Colonic mucosa (tissue), 4 donors: ENCODE measurements at regions of chr5 and their contacts with region 1.

Region 1: DNA sequence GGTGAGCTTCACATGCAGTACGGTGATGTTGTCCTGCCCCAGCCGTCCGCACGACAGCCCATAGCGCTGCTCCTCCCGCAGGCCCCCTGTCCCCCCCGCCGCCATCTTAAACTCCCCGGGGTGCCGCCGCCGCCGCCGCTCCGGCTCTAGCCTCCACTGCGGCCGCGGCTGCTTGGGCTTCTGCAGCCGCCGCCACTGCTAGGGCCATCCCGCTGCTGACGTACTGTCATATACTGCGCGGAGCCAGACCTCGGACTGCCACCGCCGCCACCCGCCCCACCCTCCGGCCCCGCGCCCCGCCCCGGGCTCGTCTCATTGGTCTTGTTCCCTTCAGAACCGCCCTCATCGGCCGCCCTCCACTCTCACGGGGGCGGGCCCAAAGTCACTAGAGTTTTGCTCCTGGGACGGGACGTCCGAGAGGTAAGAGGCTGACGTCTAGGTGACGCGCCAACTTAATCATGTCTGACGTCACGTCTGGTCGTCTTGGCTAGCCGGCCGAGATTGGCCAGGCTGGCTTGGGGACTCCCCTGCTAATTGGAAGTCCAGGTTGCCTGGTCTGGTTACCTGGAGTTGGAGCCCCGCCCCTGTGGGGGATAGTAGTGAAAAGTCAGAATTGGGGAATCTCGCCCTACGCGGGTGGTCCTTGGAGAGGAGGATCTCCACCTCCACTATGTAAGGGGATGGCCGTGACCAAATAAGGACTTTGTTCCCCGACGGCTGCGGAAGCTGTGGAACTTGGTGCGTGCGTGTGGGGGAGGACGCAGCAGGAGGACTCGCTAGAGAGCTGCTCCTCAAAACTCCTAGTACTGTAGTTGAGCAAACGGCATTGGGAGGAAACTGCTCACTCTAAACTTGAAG is at the start of gene ELL2:
- DNase-seq: peak; percentile 99
- H3K4me3 ChIP-seq: peak within 1 kb of the TSS; percentile 88
- H3K27ac ChIP-seq: peak within 1 kb of the TSS; percentile 96
- H3K4me1 ChIP-seq: peaks cover 13% of the 10 kb centered on the region
- H3K27me3 ChIP-seq: no peaks in the 10 kb centered on the region
- CTCF ChIP-seq: no peak
- total RNA-seq, gene ELL2: 26.9 to 38.2 TPM

Region 2: DNA sequence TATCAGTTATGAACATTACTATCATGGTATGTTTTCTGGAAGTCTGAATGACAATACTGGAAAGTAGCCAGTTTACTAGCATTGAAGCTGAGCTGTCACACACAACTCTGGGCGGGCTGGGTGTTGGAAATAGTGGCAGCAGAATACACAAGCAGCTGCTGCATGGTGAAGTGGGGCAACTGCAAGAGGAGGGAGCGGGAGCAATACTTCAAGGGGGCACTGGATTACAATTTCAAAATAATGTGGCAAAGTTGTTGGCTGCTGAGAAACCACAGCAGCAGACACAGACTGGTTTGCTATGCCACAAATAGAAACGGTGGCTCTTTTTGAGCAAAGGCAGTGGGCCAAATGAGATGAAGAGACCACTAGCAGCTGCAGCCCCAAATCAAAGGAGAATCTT is 1693.6 kb before region 1 on chr5:
- intact Hi-C with region 1: no loop called
- DNase-seq: no peak
- H3K4me3 ChIP-seq: no peak overlapping the region
- H3K27ac ChIP-seq: no peak overlapping the region
- H3K4me1 ChIP-seq: no peaks in the 10 kb centered on the region
- H3K27me3 ChIP-seq: no peaks in the 10 kb centered on the region
- CTCF ChIP-seq: no peak

Region 3: DNA sequence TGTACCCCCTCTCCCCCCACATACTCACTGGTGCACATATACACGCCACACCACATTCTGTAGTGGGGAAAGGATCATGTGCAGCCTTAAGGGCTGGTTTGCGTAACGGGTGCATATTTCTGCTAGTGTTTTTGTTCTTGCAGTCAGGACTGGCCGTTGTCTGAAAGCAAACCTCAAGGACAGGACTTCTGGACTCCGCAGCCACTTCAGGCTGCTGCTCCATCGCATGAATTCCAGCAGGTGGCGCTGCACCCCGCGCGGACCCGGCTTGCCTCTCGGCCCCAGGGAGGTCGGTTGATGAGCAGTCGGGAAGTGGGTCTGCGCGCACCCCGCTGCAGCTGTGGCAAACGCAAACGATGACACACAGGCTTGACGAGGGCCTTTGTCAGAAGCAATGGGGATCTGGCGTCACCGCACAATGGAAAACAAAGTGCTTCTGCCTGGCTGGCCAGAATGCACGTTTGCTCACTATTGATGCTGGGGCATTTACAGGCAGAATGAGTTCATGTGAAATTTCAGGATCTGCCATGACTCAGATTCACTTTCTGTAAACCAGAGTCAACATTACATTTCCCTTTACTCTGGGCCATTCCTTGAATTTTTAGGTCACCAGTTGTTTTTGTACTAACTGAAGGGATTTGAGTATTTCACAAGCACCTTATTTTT is 103.1 kb before region 1 on chr5:
- intact Hi-C with region 1: loop called (anchors 5 kb)
- DNase-seq: peak; percentile 88
- H3K4me3 ChIP-seq: no peak overlapping the region
- H3K27ac ChIP-seq: peak overlapping the region; percentile 37
- H3K4me1 ChIP-seq: peaks cover 7% of the 10 kb centered on the region
- H3K27me3 ChIP-seq: no peaks in the 10 kb centered on the region
- CTCF ChIP-seq: peak; percentile 98